Left colon (tissue), 2 donors: ENCODE measurements at regions of chr12 and their contacts with region 1.

Region 1: GRCh38 chr12:109385339-109386067 is 37.8 kb downstream of the MYO1H start:
- DNase-seq: no peak
- ATAC-seq: peak; percentile 72

Region 2: DNA sequence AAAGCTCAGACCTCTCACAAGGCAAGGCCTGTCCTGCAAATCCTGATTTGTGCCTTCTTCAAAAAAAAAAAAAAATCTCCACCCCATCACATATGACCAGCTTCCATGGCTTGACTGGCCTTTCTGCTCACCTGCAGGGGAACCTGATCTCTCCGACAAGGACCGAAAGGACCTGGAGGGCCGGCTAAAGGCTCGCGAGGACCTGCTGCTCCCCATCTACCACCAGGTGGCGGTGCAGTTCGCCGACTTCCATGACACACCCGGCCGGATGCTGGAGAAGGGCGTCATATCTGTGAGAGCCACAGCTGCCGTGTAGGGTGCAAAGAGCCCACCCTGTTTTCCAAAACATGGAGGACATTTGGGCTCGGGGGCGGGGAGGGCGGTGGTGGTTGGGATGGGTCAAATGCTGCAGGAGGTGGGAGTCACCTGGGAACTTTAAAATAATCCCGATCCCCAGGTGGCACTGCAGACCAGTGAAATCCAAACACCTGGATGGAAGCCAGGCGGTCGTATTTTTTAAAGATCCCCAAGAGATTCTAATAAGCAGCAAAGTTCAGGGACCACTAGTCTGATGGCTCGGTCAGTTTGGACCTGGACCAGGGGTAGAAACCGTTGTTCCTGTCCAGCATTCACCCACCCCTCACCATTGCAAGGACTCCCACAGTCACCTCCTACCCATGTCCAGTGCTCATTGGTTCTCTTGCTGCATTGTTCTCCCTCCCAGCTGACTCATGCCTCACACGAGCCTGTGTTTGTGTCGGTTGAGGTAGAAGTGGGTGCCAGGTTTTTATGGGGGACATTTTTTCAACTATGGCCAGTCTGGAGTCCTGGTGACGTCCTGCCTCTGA is 121.2 kb before region 1 on chr12:
- intact Hi-C with region 1: loop called (anchors 5 to 10 kb)
- DNase-seq: peak; percentile 67 to 87
- ATAC-seq: peak; percentile 92